Calu3 (cell line): ENCODE measurements at regions of chr9 and their contacts with region 1.

Region 1: DNA sequence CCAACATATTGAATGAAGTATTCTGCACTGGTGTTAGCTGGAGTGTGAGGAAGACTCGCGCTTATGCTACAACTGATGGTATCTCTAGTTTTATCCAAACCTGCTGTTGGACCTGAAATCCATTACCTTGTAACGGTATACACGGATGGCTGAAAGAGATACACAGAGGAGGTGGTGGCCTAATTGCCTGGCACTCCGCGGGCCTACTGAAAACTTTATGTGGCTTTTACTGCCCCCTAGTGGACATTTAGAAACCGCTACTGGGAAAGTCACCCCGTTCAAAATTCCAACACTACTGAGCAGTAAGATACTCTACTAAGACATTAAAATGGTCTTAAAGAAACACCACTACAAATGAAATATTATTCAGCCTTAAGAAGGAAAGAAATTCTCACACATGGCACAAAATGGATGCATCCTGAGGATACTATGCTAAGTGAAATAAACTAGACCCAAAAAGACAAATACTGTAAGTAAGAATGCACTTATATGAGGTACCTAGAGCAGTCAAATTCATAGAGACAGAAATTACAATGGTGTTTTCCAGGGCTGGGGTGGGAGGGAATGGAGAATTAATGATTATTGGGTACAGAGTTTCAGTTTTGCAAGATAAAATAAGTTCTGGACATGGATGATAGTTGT is 100.4 kb downstream of the TTLL11 start:
- DNase-seq: peak; percentile 38
- H3K4me3 Mint-ChIP-seq: no peak overlapping the region
- H3K27ac Mint-ChIP-seq: no peak overlapping the region
- H3K4me1 Mint-ChIP-seq: peaks cover 8% of the 10 kb centered on the region
- H3K27me3 Mint-ChIP-seq: no peaks in the 10 kb centered on the region
- CTCF ChIP-seq: peak; percentile 43

Region 2: DNA sequence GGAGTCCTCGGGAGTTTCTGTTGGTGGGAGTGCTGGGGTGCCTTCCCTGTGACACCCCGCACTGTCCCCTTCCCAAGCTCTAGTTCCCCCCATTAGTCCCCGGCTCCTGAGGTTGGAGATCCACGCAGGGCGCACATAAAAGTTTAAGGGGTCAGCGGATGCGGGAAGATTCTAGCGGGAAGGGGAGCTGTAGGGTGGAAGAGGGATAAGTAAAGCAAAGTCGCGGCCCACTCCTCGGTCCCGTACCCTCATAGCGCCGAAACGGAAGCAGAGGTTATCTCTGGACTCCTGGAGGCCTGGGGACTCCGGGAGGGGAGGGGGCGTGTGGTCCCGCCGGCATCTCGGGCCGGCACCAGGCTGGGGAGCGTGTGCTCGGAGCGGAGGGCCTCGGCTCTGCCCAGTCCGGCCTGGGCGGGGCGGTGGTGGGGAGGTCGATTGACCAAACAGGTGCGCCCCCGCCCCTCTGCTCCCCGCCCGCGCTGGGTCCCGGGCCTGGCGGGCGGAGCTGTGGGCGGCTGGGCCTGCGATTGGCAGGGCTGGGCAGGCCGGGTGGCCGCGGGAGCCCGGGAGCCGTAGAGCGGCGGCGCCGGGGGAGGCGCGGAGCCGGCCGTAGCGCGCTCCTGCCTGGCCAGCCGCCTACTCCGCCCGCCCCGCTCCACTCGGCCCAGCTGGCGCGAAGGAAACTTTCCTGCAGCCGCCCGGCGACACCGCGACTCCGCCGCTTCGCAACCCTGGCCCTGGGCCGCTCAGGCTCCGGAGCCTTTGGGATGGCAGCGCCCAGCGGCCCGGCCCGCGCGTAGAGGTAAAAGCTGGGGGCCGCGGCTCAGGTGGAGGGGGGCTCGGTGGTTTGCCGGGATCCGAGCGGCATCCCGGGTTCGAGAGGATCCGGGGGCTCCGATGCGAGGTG is 393.5 kb before region 1 on chr9:
- CTCF ChIA-PET with region 1: no interaction called
- intact Hi-C with region 1: loop called (anchors 1 kb)
- DNase-seq: peak; percentile 90
- H3K4me3 Mint-ChIP-seq: peak overlapping the region; percentile 72
- H3K27ac Mint-ChIP-seq: peak overlapping the region; percentile 54
- H3K4me1 Mint-ChIP-seq: peaks cover 12% of the 10 kb centered on the region
- H3K27me3 Mint-ChIP-seq: no peaks in the 10 kb centered on the region
- CTCF ChIP-seq: no peak

Region 3: GRCh38 chr9:121686930-121687541 is 305.7 kb before region 1 on chr9:
- CTCF ChIA-PET with region 1: interaction called, 3 read pairs
- intact Hi-C with region 1: loop called (anchors 2 kb)
- DNase-seq: peak; percentile 86
- H3K4me3 Mint-ChIP-seq: no peak overlapping the region
- H3K27ac Mint-ChIP-seq: no peak overlapping the region
- H3K4me1 Mint-ChIP-seq: peaks cover 12% of the 10 kb centered on the region
- H3K27me3 Mint-ChIP-seq: no peaks in the 10 kb centered on the region
- CTCF ChIP-seq: peak; percentile 66

Region 4: DNA sequence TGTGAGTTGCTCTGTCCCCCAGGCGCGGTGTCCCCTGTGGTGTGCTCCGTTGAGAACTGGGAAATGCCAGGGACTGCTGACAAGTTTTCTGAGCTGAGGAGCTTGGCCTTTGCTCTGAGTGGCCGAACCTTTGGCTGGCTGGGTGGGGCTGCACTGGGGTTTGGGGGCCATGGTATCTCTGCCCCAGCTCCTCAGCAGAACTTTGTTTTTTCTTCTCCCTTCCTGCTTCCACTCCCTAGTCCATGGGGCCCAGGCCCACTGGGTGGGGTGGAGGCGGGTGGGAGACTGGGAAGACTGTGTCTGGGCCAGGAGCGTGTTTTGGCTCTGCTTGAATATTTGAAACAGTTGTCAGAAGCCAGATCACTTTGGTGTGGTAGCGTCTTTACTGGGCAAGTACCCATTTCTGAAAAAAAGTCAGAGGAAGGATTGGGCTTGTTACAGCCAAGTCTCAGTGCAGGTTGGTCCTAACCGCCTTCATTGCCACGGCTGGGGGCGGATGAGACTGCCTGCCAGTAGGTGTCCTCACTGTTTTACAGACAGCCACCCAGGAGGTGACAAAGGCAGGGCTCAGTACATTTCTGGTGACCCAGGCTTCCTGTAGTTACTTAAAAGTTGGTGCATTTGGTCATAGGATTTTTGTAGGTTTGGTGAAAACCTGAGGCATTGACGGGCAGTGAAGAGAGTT is 248.5 kb before region 1 on chr9:
- CTCF ChIA-PET with region 1: no interaction called
- intact Hi-C with region 1: loop called (anchors 2 kb)
- DNase-seq: peak; percentile 68
- H3K4me3 Mint-ChIP-seq: no peak overlapping the region
- H3K27ac Mint-ChIP-seq: no peak overlapping the region
- H3K4me1 Mint-ChIP-seq: peaks cover 33% of the 10 kb centered on the region
- H3K27me3 Mint-ChIP-seq: no peaks in the 10 kb centered on the region
- CTCF ChIP-seq: peak; percentile 27